T-cell (primary cell): ENCODE measurements at regions of chr1 and their contacts with region 1.

Region 1: DNA sequence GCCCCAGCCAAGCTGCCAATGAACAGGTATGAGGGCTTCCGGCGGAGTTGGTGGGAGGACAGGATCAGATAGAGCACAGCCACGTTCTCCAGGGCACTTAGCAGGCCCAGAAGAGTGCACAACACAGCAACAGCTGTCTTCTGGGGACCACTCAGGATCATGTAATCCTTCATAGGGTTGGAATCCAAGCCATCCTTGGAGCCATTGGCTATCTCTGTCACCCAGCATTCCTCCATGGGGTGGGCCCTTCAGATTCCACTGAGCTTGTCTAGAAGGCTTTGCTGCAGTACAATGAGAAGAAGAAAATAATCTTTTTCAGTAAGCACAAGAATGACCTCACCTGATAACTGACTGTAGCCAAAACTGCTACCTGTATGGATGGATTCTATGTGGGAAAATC is 7.3 kb upstream of the FUCA1 start:
- DNase-seq: no peak
- ATAC-seq: no peak
- H3K4me3 ChIP-seq: no peak overlapping the region
- H3K4me3 Mint-ChIP-seq: no peak overlapping the region
- H3K27ac ChIP-seq: no peak overlapping the region
- H3K27ac Mint-ChIP-seq: no peak overlapping the region
- H3K4me1 ChIP-seq: no peaks in the 10 kb centered on the region
- H3K4me1 Mint-ChIP-seq: no peaks in the 10 kb centered on the region
- H3K27me3 ChIP-seq: peaks cover 0 to 9% of the 10 kb centered on the region in 2 experiments
- H3K27me3 Mint-ChIP-seq: peaks cover 0 to 3% of the 10 kb centered on the region in 2 donors

Region 2: GRCh38 chr1:24486331-24487065 is 611.1 kb after region 1 on chr1:
- CTCF ChIA-PET with region 1: no interaction called
- POLR2A ChIA-PET with region 1: interaction called in 1 of 2 experiments, 11 read pairs
- DNase-seq: peak in 21 of 35 experiments; percentile 15 to 78 (median 42)
- ATAC-seq: peak; percentile 63 to 73 (median 68)
- H3K4me3 ChIP-seq: peak overlapping the region in 1 of 2 donors; percentile 0
- H3K4me3 Mint-ChIP-seq: peak overlapping the region; percentile 37 to 70 (median 64)
- H3K27ac ChIP-seq: peak overlapping the region; percentile 71
- H3K27ac Mint-ChIP-seq: peak overlapping the region; percentile 90 to 98
- H3K4me1 ChIP-seq: peaks cover 57 to 76% of the 10 kb centered on the region in 2 experiments
- H3K4me1 Mint-ChIP-seq: peaks cover 77 to 79% (median 77%) of the 10 kb centered on the region in 3 donors
- H3K27me3 ChIP-seq: peaks cover 0 to 3% of the 10 kb centered on the region in 2 experiments
- H3K27me3 Mint-ChIP-seq: no peaks in the 10 kb centered on the region